ENCODE measurements at regions of chr2 and their contacts with region 1.

Region 1: DNA sequence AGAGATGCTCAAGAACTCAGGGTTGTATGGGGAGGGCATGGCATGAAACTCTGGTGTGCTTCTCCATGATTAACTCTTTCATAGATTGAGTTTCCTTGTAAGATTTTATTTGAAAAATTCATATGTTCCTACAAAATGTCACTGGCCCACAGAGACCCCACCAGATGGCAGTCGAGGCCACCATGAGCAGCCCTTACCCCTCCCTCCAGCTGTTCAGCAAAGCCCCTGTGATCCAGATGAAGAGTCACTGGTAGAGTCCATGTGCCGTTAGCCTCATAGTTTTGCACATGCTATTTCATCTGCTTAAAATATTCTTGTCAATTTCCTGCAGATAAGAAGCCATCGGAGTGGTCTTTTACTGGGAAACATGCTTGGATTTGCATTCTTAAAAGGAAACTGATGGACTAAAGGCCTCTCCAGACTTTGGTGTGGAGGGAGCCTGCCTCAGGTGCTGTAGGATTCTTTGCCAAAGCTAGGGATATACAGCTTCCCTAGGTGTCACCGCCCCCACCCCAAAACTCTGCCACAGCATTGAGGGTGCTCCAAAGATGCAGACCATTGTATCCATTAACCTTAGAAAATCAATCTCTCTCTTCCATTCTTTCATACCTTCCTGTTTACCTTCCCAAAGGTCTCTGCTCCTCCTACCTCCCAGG is 18.8 kb downstream of the ZNF385B start:
- DNase-seq: no peak
- CTCF ChIP-seq: peak; percentile 52

Region 2: GRCh38 chr2:180077295-180077906 is 234.8 kb after region 1 on chr2:
- in situ Hi-C with region 1: loop called (anchors 25 kb)
- DNase-seq: peak; percentile 7
- CTCF ChIP-seq: peak; percentile 52

Region 3: DNA sequence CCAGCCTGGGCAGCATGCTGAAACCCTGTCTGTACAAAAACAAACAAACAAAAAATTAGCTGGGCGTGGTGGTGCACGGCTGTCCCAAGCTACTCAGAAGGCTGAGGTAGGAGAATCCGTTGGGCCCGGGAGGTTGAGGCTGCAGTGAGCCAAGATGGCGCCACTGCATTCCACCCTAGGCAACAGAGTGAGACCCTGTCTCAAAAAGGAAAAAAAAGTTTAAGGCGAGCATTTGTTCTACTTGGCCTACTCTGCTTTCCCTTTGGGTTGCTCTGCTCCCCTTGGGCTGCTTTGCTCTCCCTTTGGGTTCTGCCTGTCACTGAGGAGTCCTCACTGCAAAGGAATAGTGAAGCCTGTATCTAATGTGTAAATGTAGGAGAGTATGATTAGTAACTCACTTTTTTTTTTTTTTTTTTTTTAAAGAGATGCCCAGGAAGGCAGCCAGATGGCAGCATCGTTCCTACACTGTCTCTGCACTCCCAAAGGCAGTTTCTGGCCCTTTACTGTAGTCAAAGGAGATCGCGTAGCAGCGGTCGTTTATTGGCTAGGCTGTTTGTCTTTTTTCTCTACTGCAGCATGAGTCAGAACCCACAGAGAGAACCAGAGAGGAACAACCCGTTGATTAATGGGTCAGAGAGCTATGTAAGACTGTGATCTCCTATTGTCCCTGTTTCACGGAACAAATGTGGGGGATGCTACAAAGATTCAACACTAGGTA is 282.8 kb after region 1 on chr2:
- in situ Hi-C with region 1: no loop called
- DNase-seq: peak; percentile 28
- CTCF ChIP-seq: peak; percentile 55

Measured in GM13977 (cell line).